ENCODE measurements at regions of chr4 and their contacts with region 1.

Region 1: GRCh38 chr4:38319456-38320342 is 344.3 kb upstream of the KLF3 start:
- DNase-seq: peak; percentile 91
- ATAC-seq: peak; percentile 82 to 86

Region 2: DNA sequence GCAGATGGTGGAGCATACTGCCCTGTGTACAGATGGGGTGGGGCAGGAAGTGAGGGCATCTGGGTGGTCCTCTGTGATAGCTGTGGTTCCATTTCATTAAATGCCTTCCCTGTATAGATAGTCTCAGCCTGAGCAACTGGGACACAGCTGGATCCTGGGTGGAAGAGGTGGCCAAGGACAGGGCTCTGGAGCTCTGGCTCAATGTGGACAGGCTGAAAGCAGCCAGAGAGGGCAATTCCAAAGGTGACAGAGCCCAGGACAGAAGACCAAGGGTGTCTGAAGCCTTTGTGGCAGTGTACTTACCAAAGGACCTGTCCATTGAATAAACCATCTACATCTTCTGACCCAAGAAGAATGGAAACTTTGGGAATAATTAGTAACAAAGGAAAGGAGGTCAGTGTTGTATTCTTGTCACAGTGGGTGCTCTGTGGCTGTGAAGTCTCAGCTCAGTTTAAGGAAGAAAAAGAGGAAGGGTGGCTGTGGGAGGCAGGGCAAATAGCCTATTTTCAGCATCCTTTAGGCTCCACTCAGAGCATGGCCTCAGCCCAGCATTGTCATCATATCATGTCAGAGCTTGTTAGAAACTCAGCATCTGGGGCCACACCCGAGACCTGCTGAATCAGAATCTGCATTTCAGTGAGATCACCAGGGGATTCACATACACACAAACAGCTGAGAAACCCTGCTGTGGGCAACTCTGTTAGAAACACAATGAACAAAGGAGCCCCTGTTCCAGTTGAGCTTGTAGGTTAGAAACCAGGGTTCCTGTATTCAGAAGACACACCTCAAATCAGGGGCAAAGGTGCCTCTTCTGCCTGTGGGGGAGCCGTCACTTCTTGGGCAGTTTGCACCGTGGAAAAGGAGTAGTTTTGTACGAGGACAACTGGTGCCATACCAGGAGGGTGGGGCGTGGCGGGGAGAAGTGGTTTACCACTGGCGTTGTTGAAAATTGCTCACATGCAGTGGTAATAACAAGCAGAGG is 190.9 kb before region 1 on chr4:
- intact Hi-C with region 1: no loop called
- DNase-seq: peak; percentile 39
- ATAC-seq: peak in 1 of 2 donors; percentile 41

Region 3: GRCh38 chr4:38663801-38664705 is 344.4 kb after region 1 on chr4 and contains the start of gene KLF3:
- intact Hi-C with region 1: loop called in 1 of 2 experiments (anchors 2 kb)
- DNase-seq: peak; percentile 96
- ATAC-seq: peak; percentile 84 to 91
- total RNA-seq, gene KLF3: 20.6 to 29.5 TPM

Region 4: DNA sequence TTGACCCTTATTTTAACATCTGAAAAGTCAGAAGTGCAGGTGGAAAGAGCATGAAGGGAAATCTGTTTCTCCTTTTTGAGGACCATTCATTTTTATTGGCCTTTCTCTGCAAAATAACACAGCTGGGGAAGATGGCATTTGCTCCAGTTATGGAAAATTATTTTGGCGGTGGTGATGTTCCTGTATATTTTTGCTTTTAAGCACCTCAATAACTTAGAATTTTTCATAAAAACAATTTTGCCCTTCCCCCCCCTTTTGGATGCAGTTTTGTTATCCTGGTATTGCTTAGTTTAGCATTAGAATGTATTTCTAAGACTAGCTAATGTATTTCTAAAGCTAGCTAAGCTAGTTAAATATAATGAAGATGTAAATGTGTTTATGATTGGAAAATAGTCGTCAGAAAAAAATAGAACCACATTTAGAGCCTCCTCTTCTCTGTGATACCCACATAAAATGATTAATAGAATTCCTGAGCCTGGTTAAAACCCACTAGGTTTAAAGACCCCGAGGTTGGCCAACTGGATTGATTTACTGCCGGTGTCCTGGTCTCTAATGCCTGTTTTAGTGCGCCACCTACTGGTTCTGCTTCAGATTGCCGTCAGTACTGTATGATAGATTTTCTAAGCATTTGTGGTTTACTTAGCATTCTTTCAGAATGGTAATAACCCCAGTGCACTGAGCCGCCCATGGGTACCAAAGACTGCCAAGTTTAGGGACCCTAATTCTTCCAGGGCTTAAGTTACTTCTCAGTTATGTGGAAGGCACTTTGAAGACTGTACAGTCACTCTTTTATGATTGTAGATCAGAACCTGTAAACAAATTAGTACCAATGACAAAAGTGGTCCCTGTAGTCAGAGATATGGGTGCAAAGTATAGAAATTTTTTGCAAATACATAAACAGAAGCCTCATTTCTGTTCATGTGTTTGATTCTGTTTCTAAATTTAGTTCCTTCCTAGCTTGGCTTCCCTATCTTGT is 355.7 kb after region 1 on chr4:
- intact Hi-C with region 1: loop called (anchors 2 to 5 kb)
- DNase-seq: peak; percentile 77
- ATAC-seq: peak; percentile 40 to 41